ENCODE measurements at regions of chr7 and their contacts with region 1.

Region 1: GRCh38 chr7:50418086-50418515 is 32.0 kb downstream of the FIGNL1 start:
- DNase-seq: peak; percentile 43 to 85 (median 67)
- ATAC-seq: peak; percentile 97
- H3K4me3 ChIP-seq: no peak overlapping the region
- H3K4me3 Mint-ChIP-seq: no peak overlapping the region
- H3K27ac ChIP-seq: no peak overlapping the region
- H3K27ac Mint-ChIP-seq: no peak overlapping the region
- H3K4me1 ChIP-seq: peaks cover 20% of the 10 kb centered on the region
- H3K4me1 Mint-ChIP-seq: peaks cover 24% of the 10 kb centered on the region
- H3K27me3 ChIP-seq: no peaks in the 10 kb centered on the region
- H3K27me3 Mint-ChIP-seq: no peaks in the 10 kb centered on the region
- CTCF ChIP-seq: peak; percentile 73

Region 2: DNA sequence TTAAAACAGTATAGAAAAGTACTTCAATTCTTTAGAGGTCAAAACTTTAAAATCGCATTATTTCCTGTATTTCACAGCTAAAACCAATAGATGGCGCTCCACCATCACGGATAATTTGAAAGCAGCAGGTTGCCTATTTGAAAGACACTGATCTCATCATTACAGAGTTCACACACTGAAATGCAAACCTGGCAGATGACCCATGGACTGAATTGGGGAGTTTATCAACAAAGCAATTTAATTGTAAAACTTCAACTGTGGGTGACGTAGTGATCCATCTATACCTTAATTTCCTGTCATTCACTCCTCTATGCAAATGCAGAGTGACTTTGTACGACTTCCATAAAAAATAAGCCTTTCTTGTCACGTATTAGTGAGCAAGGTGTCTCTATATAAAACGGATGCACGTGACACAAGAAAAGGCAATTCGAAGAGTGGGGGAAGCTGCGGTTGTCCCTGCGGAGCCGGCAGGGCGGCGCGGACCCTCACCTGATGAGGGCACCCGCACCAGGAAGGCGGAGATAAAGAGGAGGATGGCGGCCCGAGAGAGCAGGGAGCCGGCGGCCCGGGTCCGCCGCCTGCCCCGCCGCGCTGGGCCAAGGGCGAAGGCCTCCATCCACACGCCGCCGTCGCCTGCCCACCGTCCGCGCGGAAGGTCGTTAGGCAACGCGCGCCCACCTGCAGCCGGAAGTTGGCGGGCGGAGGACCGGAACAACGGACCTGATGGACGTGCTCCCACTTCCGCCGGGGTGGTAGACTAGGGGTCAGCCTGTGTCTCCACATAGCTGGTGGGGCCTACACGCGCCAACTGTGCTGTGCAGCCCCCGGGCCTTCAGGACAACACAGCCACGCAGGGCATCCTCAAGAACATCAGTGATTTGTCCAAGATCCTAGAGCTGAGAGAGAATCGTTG is 325.3 kb before region 1 on chr7 and contains the start of gene ZPBP:
- CTCF ChIA-PET with region 1: interaction called, 35 read pairs
- POLR2A ChIA-PET with region 1: interaction called, 5 read pairs
- intact Hi-C with region 1: loop called (anchors 1 kb)
- DNase-seq: peak in 7 of 9 experiments; percentile 42 to 79 (median 54)
- ATAC-seq: peak; percentile 78
- H3K4me3 ChIP-seq: peak within 1 kb of the TSS; percentile 40 to 63
- H3K4me3 Mint-ChIP-seq: peak within 1 kb of the TSS; percentile 92
- H3K27ac ChIP-seq: peak within 1 kb of the TSS; percentile 25 to 51
- H3K27ac Mint-ChIP-seq: peak within 1 kb of the TSS; percentile 86
- H3K4me1 ChIP-seq: peaks cover 4% of the 10 kb centered on the region
- H3K4me1 Mint-ChIP-seq: peaks cover 16% of the 10 kb centered on the region
- H3K27me3 ChIP-seq: no peaks in the 10 kb centered on the region
- H3K27me3 Mint-ChIP-seq: no peaks in the 10 kb centered on the region
- CTCF ChIP-seq: peak; percentile 98
- total RNA-seq, gene ZPBP: not detected

Region 3: DNA sequence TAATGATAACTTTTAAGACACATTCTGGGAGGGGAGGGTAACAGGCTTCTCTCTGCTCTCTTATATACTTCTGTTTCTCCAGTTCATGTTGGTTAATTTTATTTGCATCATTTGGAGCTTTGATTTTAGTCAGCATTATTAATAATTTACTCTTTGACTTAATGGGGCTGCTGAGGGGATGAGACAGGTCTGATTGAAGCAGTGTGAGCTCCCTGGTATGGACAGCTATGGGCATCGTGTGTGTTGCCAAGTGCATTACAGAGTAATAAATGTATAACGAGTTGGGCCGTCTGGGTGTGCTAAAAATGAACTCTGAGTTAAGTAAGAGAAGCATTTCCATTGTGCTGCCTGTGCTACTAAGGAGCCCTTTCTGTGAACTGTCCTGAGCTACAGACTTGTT is 145.3 kb before region 1 on chr7:
- CTCF ChIA-PET with region 1: interaction called, 10 read pairs
- POLR2A ChIA-PET with region 1: no interaction called
- intact Hi-C with region 1: no loop called
- DNase-seq: no peak
- ATAC-seq: no peak
- H3K4me3 ChIP-seq: no peak overlapping the region
- H3K4me3 Mint-ChIP-seq: no peak overlapping the region
- H3K27ac ChIP-seq: no peak overlapping the region
- H3K27ac Mint-ChIP-seq: no peak overlapping the region
- H3K4me1 ChIP-seq: peaks cover 69% of the 10 kb centered on the region
- H3K4me1 Mint-ChIP-seq: peaks cover 71% of the 10 kb centered on the region
- H3K27me3 ChIP-seq: no peaks in the 10 kb centered on the region
- H3K27me3 Mint-ChIP-seq: no peaks in the 10 kb centered on the region
- CTCF ChIP-seq: no peak

Region 4: DNA sequence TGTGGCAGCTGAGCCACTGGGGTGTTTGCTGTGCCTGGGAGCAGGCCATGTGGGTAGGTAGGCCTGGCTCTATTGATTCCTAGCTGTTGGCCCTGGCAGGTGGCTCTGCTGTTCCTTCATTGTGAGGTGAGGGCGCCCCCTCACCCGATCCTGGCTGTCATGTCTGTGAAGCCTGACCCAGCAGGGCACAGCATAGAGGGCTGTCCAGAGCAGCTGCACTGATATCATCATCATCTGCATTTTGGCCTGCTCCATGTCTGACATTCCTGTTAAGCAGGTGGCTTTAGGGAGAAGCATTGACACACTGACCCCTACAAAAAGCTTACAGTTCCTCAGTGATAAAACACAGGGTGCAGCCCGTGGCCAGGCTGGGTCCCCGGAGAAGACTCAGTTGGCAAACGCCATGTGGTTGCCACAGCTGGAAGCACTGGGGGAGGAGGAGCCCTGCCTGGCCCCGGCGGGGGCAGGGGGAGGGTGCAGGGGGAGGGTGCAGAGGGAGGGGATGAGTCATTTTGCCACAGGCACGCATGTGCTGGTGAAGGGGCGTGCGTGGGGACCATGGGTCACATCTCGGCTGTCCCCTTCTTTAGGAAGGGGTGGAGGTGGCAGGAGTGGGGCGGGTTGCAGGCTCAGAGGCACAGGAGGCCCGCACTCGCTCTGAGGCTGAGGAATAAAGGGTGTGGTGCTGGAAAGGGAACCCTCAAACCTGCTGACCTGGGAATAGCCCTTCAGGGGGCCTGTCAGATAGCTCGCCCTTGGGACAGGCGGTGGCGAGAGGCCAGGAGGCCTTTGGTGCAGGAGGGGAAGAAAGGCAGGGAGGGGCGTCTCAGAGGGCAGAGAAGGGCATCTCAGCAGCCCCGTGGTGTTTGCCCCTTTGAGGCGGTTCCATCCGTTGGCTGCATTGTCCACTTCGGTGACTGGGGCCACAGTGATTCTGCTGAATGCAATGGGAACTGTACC is 82.0 kb before region 1 on chr7:
- CTCF ChIA-PET with region 1: interaction called, 10 read pairs
- POLR2A ChIA-PET with region 1: no interaction called
- intact Hi-C with region 1: no loop called
- DNase-seq: peak; percentile 55 to 91 (median 84)
- ATAC-seq: peak; percentile 55
- H3K4me3 ChIP-seq: peak overlapping the region; percentile 10 to 19
- H3K4me3 Mint-ChIP-seq: peak overlapping the region; percentile 77
- H3K27ac ChIP-seq: peak overlapping the region; percentile 40 to 90
- H3K27ac Mint-ChIP-seq: no peak overlapping the region
- H3K4me1 ChIP-seq: peaks cover 99% of the 10 kb centered on the region
- H3K4me1 Mint-ChIP-seq: peaks cover 35% of the 10 kb centered on the region
- H3K27me3 ChIP-seq: no peaks in the 10 kb centered on the region
- H3K27me3 Mint-ChIP-seq: no peaks in the 10 kb centered on the region
- CTCF ChIP-seq: no peak

Region 5: GRCh38 chr7:50389961-50390360 is 28.1 kb before region 1 on chr7:
- CTCF ChIA-PET with region 1: interaction called, 18 read pairs
- POLR2A ChIA-PET with region 1: no interaction called
- intact Hi-C with region 1: no loop called
- DNase-seq: no peak
- ATAC-seq: no peak
- H3K4me3 ChIP-seq: no peak overlapping the region
- H3K4me3 Mint-ChIP-seq: peak overlapping the region; percentile 15
- H3K27ac ChIP-seq: peak overlapping the region in 1 of 2 experiments; percentile 34
- H3K27ac Mint-ChIP-seq: peak overlapping the region; percentile 94
- H3K4me1 ChIP-seq: peaks cover 62% of the 10 kb centered on the region
- H3K4me1 Mint-ChIP-seq: peaks cover 80% of the 10 kb centered on the region
- H3K27me3 ChIP-seq: no peaks in the 10 kb centered on the region
- H3K27me3 Mint-ChIP-seq: no peaks in the 10 kb centered on the region
- CTCF ChIP-seq: no peak

Region 6: GRCh38 chr7:50679218-50680007 is 261.3 kb after region 1 on chr7:
- CTCF ChIA-PET with region 1: interaction called, 4 read pairs
- POLR2A ChIA-PET with region 1: no interaction called
- intact Hi-C with region 1: loop called in 1 of 2 experiments (anchors 5 kb)
- DNase-seq: peak in 2 of 9 experiments; percentile 63 to 75
- ATAC-seq: peak; percentile 67
- H3K4me3 ChIP-seq: no peak overlapping the region
- H3K4me3 Mint-ChIP-seq: no peak overlapping the region
- H3K27ac ChIP-seq: no peak overlapping the region
- H3K27ac Mint-ChIP-seq: no peak overlapping the region
- H3K4me1 ChIP-seq: no peaks in the 10 kb centered on the region
- H3K4me1 Mint-ChIP-seq: peaks cover 2% of the 10 kb centered on the region
- H3K27me3 ChIP-seq: no peaks in the 10 kb centered on the region
- H3K27me3 Mint-ChIP-seq: peaks cover 5% of the 10 kb centered on the region
- CTCF ChIP-seq: peak; percentile 68

Measured in CD8-positive, alpha-beta T cell (primary cell).